Heart right ventricle (tissue), 16 donors: ENCODE measurements at regions of chr11 and their contacts with region 1.

Region 1: DNA sequence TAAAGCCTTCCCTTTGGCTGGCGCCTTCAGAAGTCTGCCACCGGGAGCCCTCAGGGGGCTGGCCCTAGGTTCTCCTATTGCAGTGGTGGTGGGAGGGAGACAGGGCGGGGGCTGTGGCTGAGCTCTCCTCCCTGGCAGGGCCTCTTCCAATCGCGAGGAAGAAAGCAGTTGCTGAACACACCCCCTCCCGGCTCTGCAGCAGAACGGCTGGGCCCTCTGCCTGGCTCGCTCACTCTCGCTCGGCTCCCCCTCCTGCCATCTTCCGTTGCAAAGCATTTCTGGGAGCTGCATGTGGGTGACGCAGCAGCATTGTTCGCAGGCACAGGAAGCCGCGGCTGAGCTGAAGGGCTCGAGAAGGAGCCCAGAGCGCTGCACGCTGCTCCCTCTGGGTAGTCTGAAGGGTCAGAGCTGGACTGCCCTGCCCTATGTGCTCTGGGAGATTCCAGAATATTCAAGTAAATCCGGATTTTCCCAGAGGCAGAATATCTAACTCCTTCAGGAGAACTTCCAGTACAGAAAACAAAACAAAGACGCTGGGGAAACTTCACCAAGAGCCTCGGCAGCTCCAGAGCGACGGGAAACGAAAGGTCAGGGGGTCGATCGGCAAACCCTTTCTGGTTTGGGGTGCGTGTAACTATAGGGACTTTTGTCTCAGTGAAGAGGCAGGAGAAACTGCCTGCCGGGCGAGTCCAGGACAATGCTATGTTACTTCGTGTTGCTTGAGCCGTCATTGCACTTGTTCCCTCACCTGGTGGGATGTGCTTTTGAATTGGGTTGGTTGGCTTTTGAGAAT is 26.3 kb upstream of the GRK2 start:
- DNase-seq: peak; percentile 94 to 98
- ATAC-seq: peak; percentile 97 to 99 (median 98)
- H3K4me3 ChIP-seq: peak overlapping the region; percentile 57 to 85 (median 69)
- H3K27ac ChIP-seq: peak overlapping the region; percentile 71 to 98 (median 95)
- H3K4me1 ChIP-seq: peaks cover 15 to 55% (median 49%) of the 10 kb centered on the region in 9 donors
- H3K27me3 ChIP-seq: no peaks in the 10 kb centered on the region
- CTCF ChIP-seq: peak in 4 of 9 donors; percentile 12 to 41 (median 22)

Region 2: GRCh38 chr11:67053896-67054842 is 185.8 kb before region 1 on chr11:
- intact Hi-C with region 1: loop called in 1 of 10 experiments (anchors 1 kb)
- DNase-seq: peak; percentile 34 to 47
- ATAC-seq: peak in 7 of 8 donors; percentile 25 to 70 (median 58)
- H3K4me3 ChIP-seq: no peak overlapping the region
- H3K27ac ChIP-seq: peak overlapping the region; percentile 65 to 85 (median 74)
- H3K4me1 ChIP-seq: peaks cover 15 to 48% (median 31%) of the 10 kb centered on the region in 9 donors
- H3K27me3 ChIP-seq: peaks cover 0 to 35% (median 0%) of the 10 kb centered on the region in 7 donors
- CTCF ChIP-seq: peak; percentile 38 to 75 (median 68)

Region 3: DNA sequence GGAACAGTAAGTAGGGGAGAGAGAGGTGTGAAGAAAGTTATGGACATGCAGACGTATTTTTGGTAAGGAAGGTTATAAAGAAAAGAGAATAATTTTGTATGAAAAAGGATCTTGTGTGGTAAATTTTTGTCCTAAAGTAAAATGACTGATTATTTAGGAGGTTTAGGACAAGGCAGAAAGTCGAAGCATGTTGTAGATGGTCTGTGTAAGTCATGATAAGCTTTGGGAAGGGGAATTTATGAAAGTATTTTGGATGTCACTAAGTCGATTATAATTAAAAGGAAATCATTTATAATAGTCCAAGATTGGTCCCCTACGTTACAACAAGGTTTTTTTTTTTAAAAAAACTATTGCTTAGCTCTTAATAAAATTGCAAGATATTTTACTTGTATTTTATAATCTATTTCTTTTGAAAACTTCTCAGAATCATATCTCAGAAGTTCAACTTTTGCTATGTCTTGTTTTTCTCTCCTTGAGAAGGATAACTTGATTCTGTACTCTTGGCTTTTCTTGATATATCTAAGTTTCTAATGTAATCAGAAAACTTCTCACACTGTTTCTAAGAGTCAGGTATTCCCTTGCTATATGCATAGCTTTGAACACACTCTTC is 294.2 kb after region 1 on chr11:
- intact Hi-C with region 1: no loop called
- DNase-seq: no peak
- ATAC-seq: no peak
- H3K4me3 ChIP-seq: no peak overlapping the region
- H3K27ac ChIP-seq: no peak overlapping the region
- H3K4me1 ChIP-seq: no peaks in the 10 kb centered on the region
- H3K27me3 ChIP-seq: no peaks in the 10 kb centered on the region
- CTCF ChIP-seq: no peak